Gastrocnemius medialis (tissue), 4 donors: ENCODE measurements at regions of chr6 and their contacts with region 1.

Region 1: GRCh38 chr6:20564269-20564668 is 30.0 kb downstream of the CDKAL1 start:
- DNase-seq: no peak
- ATAC-seq: no peak
- H3K4me3 ChIP-seq: no peak overlapping the region
- H3K27ac ChIP-seq: no peak overlapping the region
- H3K4me1 ChIP-seq: peaks cover 19 to 20% of the 10 kb centered on the region in 2 donors
- H3K27me3 ChIP-seq: no peaks in the 10 kb centered on the region
- CTCF ChIP-seq: peak in 4 of 5 experiments; percentile 49 to 69 (median 68)
- POLR2A ChIP-seq: no peak

Region 2: DNA sequence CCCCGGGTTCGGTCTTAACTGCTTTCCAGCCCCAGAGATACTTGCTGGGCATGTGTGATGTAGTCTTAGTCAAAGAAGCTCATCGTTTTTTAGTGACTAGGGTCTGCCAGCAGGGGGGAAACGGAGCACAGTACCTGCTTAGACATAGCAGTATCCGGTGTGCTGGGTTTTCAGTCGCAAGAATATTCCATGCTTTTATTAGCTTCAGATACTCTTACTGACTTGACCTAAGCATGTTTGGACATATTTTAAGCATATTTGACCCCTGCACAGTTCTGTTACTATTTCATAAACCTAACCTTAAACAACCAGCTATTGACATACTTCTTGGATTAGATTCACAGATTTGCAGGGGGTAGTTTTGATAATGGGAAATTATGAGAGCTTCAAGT is 159.6 kb before region 1 on chr6:
- in situ Hi-C with region 1: no loop called
- intact Hi-C with region 1: no loop called
- DNase-seq: peak in 1 of 2 donors; percentile 57
- ATAC-seq: no peak
- H3K4me3 ChIP-seq: peak overlapping the region; percentile 77 to 92 (median 86)
- H3K27ac ChIP-seq: peak overlapping the region; percentile 87 to 98 (median 95)
- H3K4me1 ChIP-seq: peaks cover 9 to 23% of the 10 kb centered on the region in 2 donors
- H3K27me3 ChIP-seq: no peaks in the 10 kb centered on the region
- CTCF ChIP-seq: peak; percentile 28 to 53 (median 39)
- POLR2A ChIP-seq: no peak

Region 3: DNA sequence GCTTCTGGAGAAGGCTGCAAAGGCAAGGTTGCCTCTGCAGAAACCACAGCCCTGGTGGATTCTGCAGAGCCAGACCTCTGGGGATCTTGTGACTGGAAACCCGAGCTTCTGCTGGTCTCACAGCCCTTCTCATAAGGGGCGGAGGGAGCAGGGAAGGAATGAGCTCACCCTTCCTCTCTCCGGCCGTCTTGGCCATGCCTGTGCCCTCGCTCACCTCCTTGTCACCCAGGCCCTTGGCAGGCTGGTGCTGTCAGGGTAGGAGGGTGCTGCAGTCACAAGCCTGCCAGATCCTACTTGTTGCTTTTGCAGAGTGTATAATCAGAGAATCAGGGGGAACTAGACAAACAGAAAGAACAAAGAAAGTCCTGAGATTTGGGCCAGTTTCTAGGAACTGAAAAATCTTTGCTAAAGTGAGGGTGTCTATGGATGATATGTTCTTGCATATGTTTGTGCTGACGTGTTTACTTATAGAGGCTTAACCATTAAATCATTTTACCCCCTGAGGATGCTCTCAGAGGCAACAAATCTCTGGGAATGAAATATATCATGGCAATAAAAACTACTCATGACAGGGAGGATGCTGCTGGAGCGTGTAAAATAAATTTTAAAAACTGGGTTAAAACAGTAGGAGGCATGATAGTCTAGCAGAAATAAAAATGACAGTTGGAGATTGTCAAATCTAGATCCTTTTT is 784.4 kb after region 1 on chr6:
- in situ Hi-C with region 1: loop called in 1 of 4 experiments (anchors 25 kb)
- intact Hi-C with region 1: no loop called
- DNase-seq: peak; percentile 62 to 78
- ATAC-seq: peak; percentile 99
- H3K4me3 ChIP-seq: no peak overlapping the region
- H3K27ac ChIP-seq: peak overlapping the region; percentile 9 to 54 (median 34)
- H3K4me1 ChIP-seq: peaks cover 9 to 13% of the 10 kb centered on the region in 2 donors
- H3K27me3 ChIP-seq: no peaks in the 10 kb centered on the region
- CTCF ChIP-seq: no peak
- POLR2A ChIP-seq: no peak